ENCODE measurements at regions of chr1 and their contacts with region 1.

Region 1: DNA sequence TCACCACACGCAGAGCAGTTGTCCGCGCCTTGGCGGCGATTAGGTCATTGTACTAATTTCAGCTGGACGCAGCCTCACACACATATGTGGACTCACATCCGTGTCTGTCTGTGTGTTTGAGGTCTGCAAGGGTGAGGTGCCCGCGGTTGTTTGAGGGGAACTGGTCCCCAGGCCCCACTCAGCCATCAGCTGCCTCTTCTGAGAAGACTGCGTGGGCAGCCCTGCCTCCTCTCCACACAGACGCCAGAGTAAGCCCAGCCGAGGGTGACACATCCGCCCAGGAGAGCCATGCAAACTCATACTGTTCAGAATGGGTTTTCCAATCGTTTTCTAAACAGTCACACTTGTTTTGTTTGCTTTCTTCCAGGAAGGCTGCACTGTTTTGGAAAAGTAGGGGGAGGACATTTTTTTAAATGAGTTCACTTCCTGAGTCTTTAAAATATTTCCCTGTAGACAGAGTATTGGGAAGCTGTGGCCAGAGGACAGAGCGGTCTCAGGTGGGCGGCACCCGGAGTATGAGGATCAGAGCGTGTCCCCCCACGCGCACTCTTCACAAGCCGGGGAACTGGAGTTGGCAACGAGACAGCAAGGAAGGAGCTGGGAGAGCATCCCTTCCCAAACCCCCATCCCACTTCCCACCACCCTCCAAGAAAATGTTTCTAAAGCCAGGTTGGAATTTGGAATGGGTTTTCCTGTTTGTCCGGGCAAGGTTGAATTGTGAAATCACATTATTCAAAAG is 53.3 kb downstream of the TOMM20 start:
- DNase-seq: peak; percentile 70
- ATAC-seq: peak; percentile 72
- H3K4me3 ChIP-seq: peak overlapping the region in 4 of 5 experiments; percentile 1 to 42 (median 27)
- H3K4me3 Mint-ChIP-seq: peak overlapping the region; percentile 81
- H3K27ac ChIP-seq: peak overlapping the region; percentile 5 to 10
- H3K27ac Mint-ChIP-seq: peak overlapping the region; percentile 98
- H3K4me1 ChIP-seq: peaks cover 17 to 31% of the 10 kb centered on the region in 2 donors
- H3K4me1 Mint-ChIP-seq: peaks cover 33% of the 10 kb centered on the region
- H3K27me3 ChIP-seq: no peaks in the 10 kb centered on the region
- H3K27me3 Mint-ChIP-seq: no peaks in the 10 kb centered on the region
- CTCF ChIP-seq: no peak

Region 2: GRCh38 chr1:234722904-234723720 is 352.2 kb before region 1 on chr1:
- CTCF ChIA-PET with region 1: no interaction called
- POLR2A ChIA-PET with region 1: no interaction called
- intact Hi-C with region 1: loop called (anchors 5 kb)
- DNase-seq: peak; percentile 62
- ATAC-seq: no peak
- H3K4me3 ChIP-seq: no peak overlapping the region
- H3K4me3 Mint-ChIP-seq: peak overlapping the region; percentile 70
- H3K27ac ChIP-seq: peak overlapping the region in 1 of 2 donors; percentile 17
- H3K27ac Mint-ChIP-seq: peak overlapping the region; percentile 70
- H3K4me1 ChIP-seq: peaks cover 35 to 50% of the 10 kb centered on the region in 2 donors
- H3K4me1 Mint-ChIP-seq: peaks cover 47% of the 10 kb centered on the region
- H3K27me3 ChIP-seq: no peaks in the 10 kb centered on the region
- H3K27me3 Mint-ChIP-seq: no peaks in the 10 kb centered on the region
- CTCF ChIP-seq: no peak

Region 3: GRCh38 chr1:234842726-234843641 is 232.4 kb before region 1 on chr1:
- CTCF ChIA-PET with region 1: no interaction called
- POLR2A ChIA-PET with region 1: no interaction called
- intact Hi-C with region 1: loop called (anchors 5 kb)
- DNase-seq: peak; percentile 49
- ATAC-seq: peak; percentile 65
- H3K4me3 ChIP-seq: no peak overlapping the region
- H3K4me3 Mint-ChIP-seq: peak overlapping the region; percentile 50
- H3K27ac ChIP-seq: no peak overlapping the region
- H3K27ac Mint-ChIP-seq: peak overlapping the region; percentile 11
- H3K4me1 ChIP-seq: peaks cover 25 to 33% of the 10 kb centered on the region in 2 donors
- H3K4me1 Mint-ChIP-seq: peaks cover 40% of the 10 kb centered on the region
- H3K27me3 ChIP-seq: no peaks in the 10 kb centered on the region
- H3K27me3 Mint-ChIP-seq: no peaks in the 10 kb centered on the region
- CTCF ChIP-seq: no peak

Region 4: DNA sequence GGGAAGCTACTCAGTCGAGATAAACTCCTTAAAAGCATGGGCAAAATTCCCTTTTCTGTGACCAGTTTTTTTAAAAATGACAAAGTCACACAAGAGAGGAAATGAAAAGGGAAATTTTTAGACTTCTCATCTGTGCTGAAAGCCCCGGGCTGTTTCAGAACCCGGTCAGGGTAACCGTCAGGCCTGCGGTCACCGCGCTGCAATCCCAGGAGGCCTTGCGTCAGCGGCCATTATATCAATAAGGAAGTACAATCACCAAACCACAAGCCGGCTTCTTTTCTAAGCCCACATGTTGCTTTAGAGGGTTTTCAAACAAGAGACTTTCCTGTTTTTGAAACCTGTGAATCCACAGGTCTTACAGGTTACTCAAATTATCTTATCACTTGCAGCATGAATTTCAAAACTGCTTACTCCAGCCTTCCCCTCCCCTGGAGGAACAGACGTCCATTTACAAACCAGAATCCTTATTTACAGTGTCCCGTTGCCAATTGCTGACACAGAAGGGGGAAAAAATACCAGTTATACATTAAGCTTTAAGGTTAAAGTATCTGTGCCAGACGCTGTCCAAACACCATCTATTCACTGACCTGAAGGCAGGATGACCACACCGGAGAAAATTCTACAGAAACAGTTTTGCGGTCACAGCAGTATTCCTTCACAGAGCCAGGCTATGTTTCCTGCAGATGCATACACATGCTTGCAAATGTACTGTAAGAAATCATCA is 112.0 kb before region 1 on chr1:
- CTCF ChIA-PET with region 1: no interaction called
- POLR2A ChIA-PET with region 1: no interaction called
- intact Hi-C with region 1: loop called (anchors 5 kb)
- DNase-seq: peak; percentile 95
- ATAC-seq: peak; percentile 94
- H3K4me3 ChIP-seq: peak overlapping the region in 4 of 5 experiments; percentile 20 to 53 (median 35)
- H3K4me3 Mint-ChIP-seq: peak overlapping the region; percentile 88
- H3K27ac ChIP-seq: peak overlapping the region; percentile 83 to 90
- H3K27ac Mint-ChIP-seq: peak overlapping the region; percentile 96
- H3K4me1 ChIP-seq: peaks cover 50 to 62% of the 10 kb centered on the region in 2 donors
- H3K4me1 Mint-ChIP-seq: peaks cover 59% of the 10 kb centered on the region
- H3K27me3 ChIP-seq: no peaks in the 10 kb centered on the region
- H3K27me3 Mint-ChIP-seq: no peaks in the 10 kb centered on the region
- CTCF ChIP-seq: no peak

Region 5: GRCh38 chr1:235011599-235012435 is 63.5 kb before region 1 on chr1:
- CTCF ChIA-PET with region 1: interaction called, 4 read pairs
- POLR2A ChIA-PET with region 1: no interaction called
- intact Hi-C with region 1: loop called (anchors 1 kb)
- DNase-seq: peak; percentile 97
- ATAC-seq: peak; percentile 87
- H3K4me3 ChIP-seq: peak overlapping the region; percentile 23 to 52 (median 32)
- H3K4me3 Mint-ChIP-seq: peak overlapping the region; percentile 76
- H3K27ac ChIP-seq: peak overlapping the region; percentile 89 to 96
- H3K27ac Mint-ChIP-seq: peak overlapping the region; percentile 96
- H3K4me1 ChIP-seq: peaks cover 50 to 65% of the 10 kb centered on the region in 2 donors
- H3K4me1 Mint-ChIP-seq: peaks cover 82% of the 10 kb centered on the region
- H3K27me3 ChIP-seq: no peaks in the 10 kb centered on the region
- H3K27me3 Mint-ChIP-seq: no peaks in the 10 kb centered on the region
- CTCF ChIP-seq: no peak

Region 6: GRCh38 chr1:235160957-235161684 is 85.8 kb after region 1 on chr1 and contains the start of gene RBM34:
- CTCF ChIA-PET with region 1: no interaction called
- POLR2A ChIA-PET with region 1: no interaction called
- intact Hi-C with region 1: no loop called
- DNase-seq: peak; percentile 95
- ATAC-seq: peak; percentile 92
- H3K4me3 ChIP-seq: peak within 1 kb of the TSS; percentile 67 to 97 (median 78)
- H3K4me3 Mint-ChIP-seq: peak within 1 kb of the TSS; percentile 97
- H3K27ac ChIP-seq: peak within 1 kb of the TSS; percentile 89 to 92
- H3K27ac Mint-ChIP-seq: peak within 1 kb of the TSS; percentile 99
- H3K4me1 ChIP-seq: peaks cover 12 to 21% of the 10 kb centered on the region in 2 donors
- H3K4me1 Mint-ChIP-seq: peaks cover 20% of the 10 kb centered on the region
- H3K27me3 ChIP-seq: no peaks in the 10 kb centered on the region
- H3K27me3 Mint-ChIP-seq: no peaks in the 10 kb centered on the region
- CTCF ChIP-seq: peak; percentile 25
- total RNA-seq, gene RBM34: 131 and 137 TPM in 2 replicates

Measured in B cell (primary cell).